ENCODE measurements at regions of chr15 and their contacts with region 1.

Region 1: GRCh38 chr15:99275525-99276128 is 24.3 kb downstream of the LRRC28 start:
- DNase-seq: no peak
- H3K4me3 ChIP-seq: no peak overlapping the region
- H3K27ac ChIP-seq: no peak overlapping the region
- H3K4me1 ChIP-seq: peaks cover 0 to 4% (median 0%) of the 10 kb centered on the region in 4 donors
- H3K27me3 ChIP-seq: no peaks in the 10 kb centered on the region
- CTCF ChIP-seq: no peak
- EP300 ChIP-seq: no peak
- POLR2A ChIP-seq: no peak

Region 2: GRCh38 chr15:99076552-99077308 is 198.9 kb before region 1 on chr15:
- intact Hi-C with region 1: no loop called
- DNase-seq: peak; percentile 82
- H3K4me3 ChIP-seq: peak overlapping the region in 3 of 4 donors; percentile 32 to 40 (median 37)
- H3K27ac ChIP-seq: peak overlapping the region; percentile 48 to 61 (median 60)
- H3K4me1 ChIP-seq: no peaks in the 10 kb centered on the region
- H3K27me3 ChIP-seq: no peaks in the 10 kb centered on the region
- CTCF ChIP-seq: peak; percentile 80 to 86 (median 82)
- EP300 ChIP-seq: no peak
- POLR2A ChIP-seq: no peak

Region 3: DNA sequence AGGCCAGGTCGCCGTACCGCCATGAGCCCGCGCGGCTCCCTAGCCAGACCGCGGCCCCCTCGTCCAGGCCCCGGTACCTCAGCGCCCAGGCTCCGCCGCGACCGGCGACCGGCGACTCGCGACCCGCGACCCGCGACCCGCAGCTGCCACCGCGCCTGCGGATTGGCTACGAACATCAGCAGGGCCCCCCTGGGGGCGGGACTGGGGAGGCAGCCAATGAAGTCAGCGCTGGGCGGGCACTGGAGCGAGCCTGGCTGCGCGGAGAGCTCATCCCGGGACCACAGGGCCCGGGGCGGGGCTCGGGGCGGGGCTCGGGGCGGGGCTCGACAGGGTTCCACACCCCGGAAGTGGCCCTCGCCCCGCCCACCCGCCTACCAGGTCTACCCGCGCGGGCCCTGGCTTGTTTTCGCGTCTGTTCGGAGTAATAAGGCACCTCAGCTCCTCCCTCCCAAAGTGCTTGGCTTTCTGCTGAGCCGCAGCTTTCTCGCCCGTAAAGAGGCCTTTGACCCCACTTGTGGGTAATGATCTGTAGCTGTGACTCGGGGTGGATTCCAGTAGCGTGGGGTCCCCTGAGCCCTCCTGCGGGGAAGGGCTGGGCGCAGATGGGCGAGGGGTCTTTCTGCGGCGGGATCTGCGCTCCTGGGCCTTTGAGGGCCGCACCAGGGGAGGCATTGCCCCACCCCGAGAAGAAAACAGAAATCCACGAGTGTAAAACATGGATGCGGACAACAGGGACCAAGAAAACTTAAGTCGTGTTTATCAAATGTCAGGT is 457.8 kb after region 1 on chr15 and contains the start of gene LYSMD4:
- intact Hi-C with region 1: loop called (anchors 10 kb)
- DNase-seq: peak; percentile 99
- H3K4me3 ChIP-seq: peak within 1 kb of the TSS; percentile 59 to 95 (median 90)
- H3K27ac ChIP-seq: peak within 1 kb of the TSS; percentile 87 to 95 (median 90)
- H3K4me1 ChIP-seq: peaks cover 0 to 32% (median 20%) of the 10 kb centered on the region in 4 donors
- H3K27me3 ChIP-seq: no peaks in the 10 kb centered on the region
- CTCF ChIP-seq: no peak
- EP300 ChIP-seq: no peak
- POLR2A ChIP-seq: peak; percentile 18 to 25
- total RNA-seq, gene LYSMD4: 7.1 to 15.3 (median 8.8) TPM

Region 4: DNA sequence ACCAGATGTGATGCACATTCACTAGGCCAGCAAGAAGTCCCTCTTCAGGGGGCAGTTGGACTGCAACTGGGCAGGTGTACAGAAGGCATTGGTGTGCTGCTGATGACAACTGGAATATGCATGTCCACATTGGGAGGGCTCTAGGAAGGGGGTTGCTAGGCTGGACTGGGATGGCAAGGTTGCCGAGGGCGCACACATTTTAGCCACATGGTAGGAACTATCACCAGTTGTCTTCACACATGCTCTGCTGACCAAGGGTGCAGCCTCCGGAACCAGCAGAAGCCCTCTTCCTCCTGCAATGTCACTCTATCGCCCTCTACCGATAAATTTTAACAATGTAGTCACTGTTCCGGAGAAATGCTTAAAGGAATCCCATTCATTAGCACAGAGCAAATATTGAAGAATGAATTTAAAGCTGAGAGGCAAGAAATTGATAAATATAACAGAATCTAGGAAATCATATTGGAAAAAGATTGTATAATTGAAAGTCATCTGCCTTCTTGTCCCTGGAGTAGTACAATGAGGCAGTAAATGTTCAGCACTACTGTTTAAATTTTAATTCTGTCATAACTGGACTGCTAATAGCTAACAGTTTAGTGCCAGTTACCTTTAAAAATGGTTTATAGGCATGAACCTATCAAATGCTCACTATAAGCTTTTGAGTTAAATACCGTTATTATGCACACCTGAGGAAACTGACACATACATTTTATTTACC is 480.2 kb after region 1 on chr15:
- intact Hi-C with region 1: loop called (anchors 5 kb)
- DNase-seq: peak; percentile 74
- H3K4me3 ChIP-seq: no peak overlapping the region
- H3K27ac ChIP-seq: no peak overlapping the region
- H3K4me1 ChIP-seq: no peaks in the 10 kb centered on the region
- H3K27me3 ChIP-seq: no peaks in the 10 kb centered on the region
- CTCF ChIP-seq: peak; percentile 52 to 87 (median 64)
- EP300 ChIP-seq: no peak
- POLR2A ChIP-seq: no peak

Measured in sigmoid colon (tissue), 7 donors.